ENCODE measurements at regions of chr1 and their contacts with region 1.

Region 1: GRCh38 chr1:183327434-183328290 is 90.5 kb downstream of the NMNAT2 start:
- DNase-seq: no peak

Region 2: DNA sequence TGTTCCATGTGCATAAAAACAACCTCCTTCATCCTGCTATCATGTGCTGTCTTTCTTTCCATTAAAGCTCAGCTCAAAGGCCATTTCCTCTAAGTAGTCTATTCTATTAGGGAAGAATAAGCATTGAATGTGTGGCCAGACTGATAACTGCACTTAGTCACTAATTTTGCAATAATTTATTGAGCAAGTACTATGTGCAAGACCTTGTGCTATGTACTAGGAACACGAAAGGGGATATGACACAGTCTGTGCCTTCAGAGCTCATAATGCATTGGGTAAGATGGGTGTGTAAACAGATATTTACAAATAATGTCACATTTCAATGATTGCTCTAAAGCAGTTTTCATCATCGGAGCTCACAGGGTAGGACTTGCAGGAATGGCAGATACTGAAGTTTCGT is 36.3 kb after region 1 on chr1:
- intact Hi-C with region 1: loop called in 1 of 2 experiments (anchors 1 kb)
- DNase-seq: no peak

Measured in posterior vena cava (tissue), 2 donors.